ENCODE measurements at regions of chr6 and their contacts with region 1.

Region 1: DNA sequence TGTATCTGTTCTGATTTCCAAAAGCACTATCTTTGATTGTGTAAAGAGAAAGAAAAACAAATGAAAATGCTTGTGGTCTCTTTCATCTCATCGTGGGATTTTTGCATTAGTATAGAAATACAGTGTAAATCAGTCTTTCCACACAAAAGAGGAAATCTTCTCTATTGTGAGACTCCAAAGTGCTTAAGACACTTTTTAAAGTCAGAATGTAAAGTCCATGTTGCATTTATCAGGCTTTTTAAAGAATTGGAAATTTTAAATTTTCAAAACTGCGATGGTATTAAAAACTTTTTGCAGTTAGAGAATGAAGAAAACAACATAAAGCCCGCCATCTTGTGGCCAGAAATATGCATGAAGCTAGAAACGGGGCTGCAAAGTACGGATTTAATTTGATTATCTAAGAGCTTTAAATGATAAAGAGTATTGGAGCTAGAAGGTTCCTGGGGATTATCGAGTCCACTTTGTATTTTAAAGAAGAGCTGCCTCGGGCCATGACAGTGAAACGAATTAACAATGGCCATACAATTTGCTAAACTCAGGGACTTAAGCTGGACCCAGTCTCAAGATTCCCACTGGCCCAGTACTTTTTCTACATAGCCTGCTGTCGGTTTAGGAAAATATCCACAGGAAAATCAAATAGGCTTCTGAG is 339.6 kb downstream of the ARHGAP18 start:
- DNase-seq: peak in 2 of 3 donors; percentile 3
- H3K4me3 ChIP-seq: no peak overlapping the region
- H3K4me3 Mint-ChIP-seq: no peak overlapping the region
- H3K27ac ChIP-seq: no peak overlapping the region
- H3K27ac Mint-ChIP-seq: no peak overlapping the region
- H3K4me1 ChIP-seq: no peaks in the 10 kb centered on the region
- H3K4me1 Mint-ChIP-seq: no peaks in the 10 kb centered on the region
- H3K27me3 ChIP-seq: no peaks in the 10 kb centered on the region
- H3K27me3 Mint-ChIP-seq: peaks cover 0 to 6% (median 2%) of the 10 kb centered on the region in 3 donors
- CTCF ChIP-seq: peak; percentile 78

Region 2: GRCh38 chr6:129239825-129240491 is 130.4 kb before region 1 on chr6:
- intact Hi-C with region 1: no loop called
- DNase-seq: no peak
- H3K4me3 ChIP-seq: no peak overlapping the region
- H3K4me3 Mint-ChIP-seq: no peak overlapping the region
- H3K27ac ChIP-seq: no peak overlapping the region
- H3K27ac Mint-ChIP-seq: no peak overlapping the region
- H3K4me1 ChIP-seq: no peaks in the 10 kb centered on the region
- H3K4me1 Mint-ChIP-seq: no peaks in the 10 kb centered on the region
- H3K27me3 ChIP-seq: no peaks in the 10 kb centered on the region
- H3K27me3 Mint-ChIP-seq: peaks cover 0 to 2% (median 2%) of the 10 kb centered on the region in 3 donors
- CTCF ChIP-seq: no peak

Region 3: DNA sequence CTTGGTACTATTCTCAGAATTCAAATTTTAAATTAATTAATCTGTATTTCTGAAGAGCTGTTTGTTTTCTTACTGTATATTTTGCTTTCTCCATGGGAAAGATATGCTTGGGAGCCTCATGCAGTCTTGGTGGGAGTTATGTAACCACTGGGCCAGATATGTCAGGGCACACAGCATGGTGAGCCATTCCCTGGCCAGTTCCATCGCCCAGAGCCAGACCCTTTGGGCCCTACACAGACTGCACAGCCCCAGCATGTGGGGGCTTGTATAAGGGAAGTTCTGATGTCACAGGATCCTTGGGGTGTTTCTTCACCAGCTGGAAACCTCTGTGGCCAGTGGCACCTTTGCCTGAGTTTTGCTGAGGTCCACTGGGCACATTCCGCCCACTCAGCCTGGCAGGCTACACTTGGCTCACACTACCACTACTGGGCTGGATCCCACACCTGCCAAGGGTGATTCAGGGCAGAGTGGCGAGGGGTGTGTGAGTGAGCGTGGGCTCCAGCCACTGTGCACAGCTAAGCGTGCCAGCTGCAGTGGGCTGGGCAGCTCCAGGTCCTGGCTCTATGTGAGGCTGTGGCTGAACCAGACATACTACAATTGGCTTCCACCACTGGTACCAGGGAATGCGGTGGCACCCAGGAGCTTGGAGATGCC is 46.1 kb after region 1 on chr6:
- intact Hi-C with region 1: no loop called
- DNase-seq: no peak
- H3K4me3 ChIP-seq: no peak overlapping the region
- H3K4me3 Mint-ChIP-seq: no peak overlapping the region
- H3K27ac ChIP-seq: no peak overlapping the region
- H3K27ac Mint-ChIP-seq: no peak overlapping the region
- H3K4me1 ChIP-seq: no peaks in the 10 kb centered on the region
- H3K4me1 Mint-ChIP-seq: no peaks in the 10 kb centered on the region
- H3K27me3 ChIP-seq: no peaks in the 10 kb centered on the region
- H3K27me3 Mint-ChIP-seq: peaks cover 2 to 3% (median 2%) of the 10 kb centered on the region in 3 donors
- CTCF ChIP-seq: no peak

Region 4: GRCh38 chr6:129558248-129558647 is 187.9 kb after region 1 on chr6:
- intact Hi-C with region 1: no loop called
- DNase-seq: no peak
- H3K4me3 ChIP-seq: no peak overlapping the region
- H3K4me3 Mint-ChIP-seq: no peak overlapping the region
- H3K27ac ChIP-seq: no peak overlapping the region
- H3K27ac Mint-ChIP-seq: no peak overlapping the region
- H3K4me1 ChIP-seq: no peaks in the 10 kb centered on the region
- H3K4me1 Mint-ChIP-seq: no peaks in the 10 kb centered on the region
- H3K27me3 ChIP-seq: no peaks in the 10 kb centered on the region
- H3K27me3 Mint-ChIP-seq: peaks cover 0 to 2% (median 0%) of the 10 kb centered on the region in 3 donors
- CTCF ChIP-seq: no peak

Region 5: GRCh38 chr6:129575378-129576118 is 205.2 kb after region 1 on chr6:
- intact Hi-C with region 1: loop called in 1 of 2 experiments (anchors 10 kb)
- DNase-seq: peak; percentile 43 to 71 (median 69)
- H3K4me3 ChIP-seq: no peak overlapping the region
- H3K4me3 Mint-ChIP-seq: no peak overlapping the region
- H3K27ac ChIP-seq: no peak overlapping the region
- H3K27ac Mint-ChIP-seq: no peak overlapping the region
- H3K4me1 ChIP-seq: no peaks in the 10 kb centered on the region
- H3K4me1 Mint-ChIP-seq: peaks cover 6% of the 10 kb centered on the region
- H3K27me3 ChIP-seq: no peaks in the 10 kb centered on the region
- H3K27me3 Mint-ChIP-seq: peaks cover 0 to 3% (median 0%) of the 10 kb centered on the region in 3 donors
- CTCF ChIP-seq: peak; percentile 89